BJ (cell line): ENCODE measurements at regions of chr2 and their contacts with region 1.

Region 1: GRCh38 chr2:198645816-198646215 is 811.9 kb downstream of the SATB2 start:
- DNase-seq: no peak
- H3K4me3 ChIP-seq: no peak overlapping the region
- H3K27me3 ChIP-seq: no peaks in the 10 kb centered on the region
- CTCF ChIP-seq: no peak

Region 2: DNA sequence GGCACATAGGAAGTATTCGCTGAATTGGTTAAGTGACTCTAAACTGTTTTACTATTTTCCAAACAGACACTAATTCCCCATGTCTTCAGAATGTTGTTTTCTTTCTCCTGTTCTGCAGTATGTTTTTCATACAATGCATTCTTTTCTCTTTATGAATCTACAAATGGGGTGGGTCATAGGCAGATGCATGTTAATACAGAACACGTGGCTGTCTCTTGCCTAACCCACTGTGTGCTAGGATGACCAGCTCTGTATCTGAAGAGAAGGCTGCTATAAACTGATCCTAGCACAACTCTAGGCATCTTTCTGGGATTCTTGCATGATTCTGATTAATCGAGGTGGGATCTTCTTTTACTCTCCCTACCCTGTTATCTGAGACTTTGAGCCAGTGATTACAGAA is 15.4 kb before region 1 on chr2:
- CTCF ChIA-PET with region 1: no interaction called
- POLR2A ChIA-PET with region 1: no interaction called
- DNase-seq: no peak
- H3K4me3 ChIP-seq: no peak overlapping the region
- H3K27me3 ChIP-seq: no peaks in the 10 kb centered on the region
- CTCF ChIP-seq: no peak

Region 3: DNA sequence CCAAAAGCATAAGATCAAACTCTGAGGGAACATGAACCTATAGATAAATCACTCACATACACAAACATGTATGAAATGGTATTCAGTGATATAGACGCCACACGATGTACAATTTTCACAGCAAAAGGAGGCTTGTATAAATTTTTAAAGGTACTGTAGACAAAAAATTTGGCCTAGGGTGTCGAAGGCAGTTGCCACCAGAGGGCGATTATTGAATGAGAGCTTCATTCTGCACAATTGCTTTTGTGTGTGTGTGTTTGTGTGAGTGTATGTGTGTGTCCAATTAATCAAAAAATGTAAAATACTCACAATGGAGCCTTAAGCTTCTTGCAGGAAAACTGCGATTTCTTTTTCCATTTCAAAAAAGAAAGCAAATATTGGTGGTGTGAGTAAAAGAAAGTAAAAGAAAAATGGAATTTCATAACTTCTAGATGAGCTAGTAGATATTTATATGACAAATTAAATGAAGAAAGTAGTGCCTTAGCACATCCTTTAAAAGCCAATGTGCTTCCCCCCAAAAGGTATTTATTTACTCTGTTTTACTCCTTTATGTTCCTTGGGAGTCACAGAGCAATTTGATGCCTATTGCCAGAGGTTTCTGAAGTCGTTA is 11.8 kb after region 1 on chr2:
- CTCF ChIA-PET with region 1: interaction called, 12 read pairs
- POLR2A ChIA-PET with region 1: no interaction called
- DNase-seq: no peak
- H3K4me3 ChIP-seq: no peak overlapping the region
- H3K27me3 ChIP-seq: no peaks in the 10 kb centered on the region
- CTCF ChIP-seq: peak; percentile 54

Region 4: GRCh38 chr2:199903111-199903510 is 1257.3 kb after region 1 on chr2:
- CTCF ChIA-PET with region 1: no interaction called
- POLR2A ChIA-PET with region 1: no interaction called
- DNase-seq: no peak
- H3K4me3 ChIP-seq: no peak overlapping the region
- H3K27me3 ChIP-seq: no peaks in the 10 kb centered on the region; the same call in 1 of the 2 replicates
- CTCF ChIP-seq: no peak